Activated naive CD4-positive, alpha-beta T cell treated with anti-CD3 and anti-CD28 coated beads for 36 hours (primary cell): ENCODE measurements at regions of chr14 and their contacts with region 1.

Region 1: DNA sequence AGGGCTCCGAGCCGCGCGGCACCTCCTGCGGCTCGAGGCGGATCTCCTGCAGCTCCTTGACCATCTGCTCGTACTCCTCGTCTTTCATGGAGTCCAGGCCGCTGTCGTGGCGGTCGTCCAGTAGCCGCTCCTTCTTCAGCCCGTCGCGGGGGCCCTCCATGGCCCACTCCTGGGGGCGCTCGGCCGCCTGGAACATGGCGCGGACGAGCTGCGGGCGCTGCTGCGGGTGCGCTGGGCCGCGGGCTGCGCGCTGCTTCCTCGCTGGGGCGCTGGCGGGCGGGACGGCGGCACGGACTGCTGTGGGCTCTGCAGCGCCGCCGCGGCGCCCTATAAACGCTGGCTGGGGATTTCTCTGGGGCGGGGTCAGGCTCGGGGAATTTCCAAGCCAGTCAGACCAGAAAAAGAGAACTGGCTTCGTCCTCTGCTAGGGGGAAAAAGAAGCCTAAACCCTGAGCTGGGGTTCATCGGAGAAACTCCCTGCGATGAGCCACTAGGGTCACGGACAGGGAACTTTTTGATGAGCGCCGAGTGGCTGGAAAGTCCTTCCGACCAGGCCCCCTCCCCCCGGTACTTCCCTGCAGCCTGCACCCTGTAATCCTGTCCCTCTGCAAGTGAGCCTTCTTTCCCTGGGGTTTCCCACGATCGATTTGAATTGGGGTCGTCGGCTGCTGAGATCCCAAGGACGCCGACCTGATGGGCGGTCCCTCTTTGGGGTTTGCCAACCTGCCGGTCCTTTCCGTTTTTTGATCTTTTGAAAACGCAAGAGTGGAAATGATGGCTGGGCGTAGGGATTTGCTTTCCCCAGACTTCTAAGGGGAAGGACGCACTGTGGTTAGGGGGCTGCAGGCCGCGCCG is at the start of gene NFKBIA:
- DNase-seq: peak; percentile 96
- H3K4me3 Mint-ChIP-seq: peak within 1 kb of the TSS; percentile 98
- H3K27ac Mint-ChIP-seq: peak within 1 kb of the TSS; percentile 99
- H3K4me1 Mint-ChIP-seq: peaks cover 31% of the 10 kb centered on the region
- H3K27me3 Mint-ChIP-seq: no peaks in the 10 kb centered on the region
- total RNA-seq, gene NFKBIA: 289 to 293 TPM

Region 2: GRCh38 chr14:34931206-34931605 is 473.5 kb before region 1 on chr14:
- CTCF ChIA-PET with region 1: no interaction called
- intact Hi-C with region 1: loop called (anchors 1 kb)
- DNase-seq: peak; percentile 56
- H3K4me3 Mint-ChIP-seq: peak overlapping the region; percentile 64
- H3K27ac Mint-ChIP-seq: peak overlapping the region; percentile 93
- H3K4me1 Mint-ChIP-seq: peaks cover 49% of the 10 kb centered on the region
- H3K27me3 Mint-ChIP-seq: no peaks in the 10 kb centered on the region

Region 3: GRCh38 chr14:35140718-35141581 is 263.7 kb before region 1 on chr14:
- CTCF ChIA-PET with region 1: interaction called, 19 read pairs
- intact Hi-C with region 1: loop called (anchors 1 kb)
- DNase-seq: no peak
- H3K4me3 Mint-ChIP-seq: no peak overlapping the region
- H3K27ac Mint-ChIP-seq: no peak overlapping the region
- H3K4me1 Mint-ChIP-seq: peaks cover 8% of the 10 kb centered on the region
- H3K27me3 Mint-ChIP-seq: no peaks in the 10 kb centered on the region

Region 4: DNA sequence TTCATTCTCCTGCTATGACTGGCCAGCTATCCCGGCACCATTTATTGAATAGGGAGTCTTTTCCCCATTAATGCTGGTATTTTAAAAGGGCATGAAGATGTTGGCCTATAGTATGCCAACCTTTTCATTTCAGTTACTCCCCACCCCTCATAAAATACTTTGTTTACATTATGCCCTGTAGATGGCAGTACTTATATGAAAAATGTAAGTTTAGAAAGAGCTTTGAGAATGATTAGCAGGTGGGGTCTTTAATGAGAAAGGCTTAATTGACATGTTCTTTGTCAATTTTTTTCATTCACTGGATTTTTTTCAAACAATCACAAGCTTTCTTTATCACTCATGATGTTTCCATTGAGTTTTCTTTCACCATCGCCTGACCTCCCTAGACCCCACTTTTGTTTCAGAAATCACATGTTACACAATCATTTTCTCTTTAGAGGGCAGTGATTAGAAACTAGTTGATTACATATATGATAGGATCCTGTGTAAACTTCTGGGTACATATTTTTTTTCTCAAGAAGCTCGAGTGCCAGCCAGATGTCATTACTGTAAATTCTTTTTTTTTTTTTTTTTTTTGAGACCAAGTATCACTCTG is 175.1 kb before region 1 on chr14:
- CTCF ChIA-PET with region 1: interaction called, 40 read pairs
- intact Hi-C with region 1: loop called (anchors 1 kb)
- DNase-seq: no peak
- H3K4me3 Mint-ChIP-seq: no peak overlapping the region
- H3K27ac Mint-ChIP-seq: peak overlapping the region; percentile 37
- H3K4me1 Mint-ChIP-seq: peaks cover 23% of the 10 kb centered on the region
- H3K27me3 Mint-ChIP-seq: no peaks in the 10 kb centered on the region

Region 5: GRCh38 chr14:35320472-35320871 is 84.2 kb before region 1 on chr14:
- CTCF ChIA-PET with region 1: interaction called, 7 read pairs
- intact Hi-C with region 1: loop called (anchors 1 kb)
- DNase-seq: no peak
- H3K4me3 Mint-ChIP-seq: no peak overlapping the region
- H3K27ac Mint-ChIP-seq: no peak overlapping the region
- H3K4me1 Mint-ChIP-seq: peaks cover 1% of the 10 kb centered on the region
- H3K27me3 Mint-ChIP-seq: no peaks in the 10 kb centered on the region

Region 6: DNA sequence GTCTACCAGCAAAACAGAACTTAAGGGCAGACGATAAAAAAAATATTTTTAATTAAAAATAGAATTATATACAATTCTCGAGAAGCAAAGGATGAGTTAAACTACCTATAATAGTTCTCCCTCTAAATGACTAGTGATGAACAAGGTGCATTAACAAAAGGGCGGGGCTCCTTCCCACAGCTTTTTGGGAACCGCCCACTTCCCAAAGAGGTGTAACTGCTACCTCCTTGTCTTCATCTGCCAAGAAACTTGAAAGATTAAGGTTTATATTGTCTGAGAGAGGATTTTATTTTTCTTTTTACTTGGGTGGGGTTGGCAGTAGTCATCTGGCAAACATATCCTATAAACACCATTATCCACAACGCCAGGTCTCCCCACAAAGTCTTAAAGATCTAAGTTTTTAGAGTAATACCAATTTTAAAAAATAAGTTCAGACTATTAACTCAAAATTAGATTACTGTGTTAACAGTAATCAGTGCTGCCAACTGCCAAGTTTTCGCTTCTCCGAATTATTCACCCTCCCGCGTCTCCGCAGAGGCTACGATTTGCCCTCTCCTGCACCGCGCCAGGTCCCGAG is 403.5 kb after region 1 on chr14:
- CTCF ChIA-PET with region 1: no interaction called
- intact Hi-C with region 1: loop called (anchors 1 kb)
- DNase-seq: peak; percentile 61
- H3K4me3 Mint-ChIP-seq: peak overlapping the region; percentile 98
- H3K27ac Mint-ChIP-seq: peak overlapping the region; percentile 86
- H3K4me1 Mint-ChIP-seq: peaks cover 28% of the 10 kb centered on the region
- H3K27me3 Mint-ChIP-seq: no peaks in the 10 kb centered on the region